ENCODE measurements at regions of chr12 and their contacts with region 1.

Region 1: GRCh38 chr12:2057041-2057794 is 4.4 kb downstream of the CACNA1C start:
- DNase-seq: no peak

Region 2: DNA sequence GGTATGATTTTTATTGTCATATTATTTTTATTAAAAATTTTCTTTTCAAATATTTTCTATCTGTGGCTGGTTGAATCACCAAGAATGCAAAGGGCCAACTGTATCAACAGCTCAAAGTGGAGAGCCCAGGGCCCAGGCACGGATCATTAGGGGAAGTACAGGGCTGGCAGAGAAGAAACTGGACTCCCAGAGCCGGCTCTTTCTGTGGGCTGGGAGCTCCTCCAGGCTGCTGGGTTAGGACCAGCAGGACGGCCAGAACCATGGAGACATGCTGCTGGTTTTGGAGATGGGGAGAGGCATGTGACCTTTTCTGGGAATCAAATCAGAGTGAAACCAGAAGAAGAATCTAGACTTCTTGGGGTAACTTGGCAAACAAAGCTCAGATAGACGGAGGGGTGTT is 216.1 kb after region 1 on chr12:
- intact Hi-C with region 1: loop called (anchors 5 kb)
- DNase-seq: peak; percentile 78

Region 3: GRCh38 chr12:2583091-2583497 is 525.9 kb after region 1 on chr12:
- intact Hi-C with region 1: loop called (anchors 5 kb)
- DNase-seq: peak; percentile 80

Measured in cardiac septum (tissue), 1 donor.